ENCODE measurements at regions of chrX and their contacts with region 1.

Region 1: DNA sequence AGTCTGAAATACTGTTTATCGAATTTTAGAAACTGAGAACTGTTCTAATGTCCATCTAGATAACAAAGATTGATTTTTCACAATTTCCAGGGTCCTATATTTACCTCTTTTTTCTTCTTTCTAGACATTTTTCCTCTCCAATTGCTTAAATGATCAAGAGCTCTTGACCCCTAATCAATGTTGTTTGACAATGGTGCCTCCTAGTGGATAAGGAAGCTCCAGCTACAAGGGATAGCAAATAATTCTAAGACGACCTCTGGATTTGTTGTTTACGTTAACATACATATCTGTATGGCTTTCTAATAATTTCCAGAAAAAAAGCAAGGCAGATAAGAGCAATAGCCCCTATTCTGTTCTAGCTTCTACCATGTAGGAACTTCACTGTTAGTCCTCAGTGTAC is 35.8 kb downstream of the GPR82 start:
- DNase-seq: peak; percentile 46 to 61
- H3K4me3 ChIP-seq: no peak overlapping the region
- H3K4me1 ChIP-seq: peaks cover 22% of the 10 kb centered on the region
- H3K27me3 ChIP-seq: no peaks in the 10 kb centered on the region

Region 2: GRCh38 chrX:41499984-41500383 is 259.8 kb before region 1 on chrX:
- in situ Hi-C with region 1: no loop called
- DNase-seq: no peak
- H3K4me3 ChIP-seq: no peak overlapping the region
- H3K4me1 ChIP-seq: no peaks in the 10 kb centered on the region
- H3K27me3 ChIP-seq: no peaks in the 10 kb centered on the region

Region 3: GRCh38 chrX:41561045-41561444 is 198.8 kb before region 1 on chrX:
- in situ Hi-C with region 1: loop called (anchors 25 kb)
- DNase-seq: no peak
- H3K4me3 ChIP-seq: no peak overlapping the region
- H3K4me1 ChIP-seq: peaks cover 8% of the 10 kb centered on the region
- H3K27me3 ChIP-seq: no peaks in the 10 kb centered on the region